Activated CD4-positive, alpha-beta memory T cell treated with anti-CD3 and anti-CD28 coated beads for 36 hours (primary cell): ENCODE measurements at regions of chr2 and their contacts with region 1.

Region 1: GRCh38 chr2:127649684-127650040 is 3.7 kb downstream of the GPR17 start:
- DNase-seq: peak; percentile 83
- H3K4me3 Mint-ChIP-seq: no peak overlapping the region
- H3K27ac Mint-ChIP-seq: no peak overlapping the region
- H3K4me1 Mint-ChIP-seq: peaks cover 7% of the 10 kb centered on the region
- H3K27me3 Mint-ChIP-seq: no peaks in the 10 kb centered on the region

Region 2: GRCh38 chr2:127324635-127325034 is 325.0 kb before region 1 on chr2:
- CTCF ChIA-PET with region 1: interaction called, 5 read pairs
- POLR2A ChIA-PET with region 1: no interaction called
- intact Hi-C with region 1: loop called (anchors 10 kb)
- DNase-seq: no peak
- H3K4me3 Mint-ChIP-seq: no peak overlapping the region
- H3K27ac Mint-ChIP-seq: no peak overlapping the region
- H3K4me1 Mint-ChIP-seq: peaks cover 6% of the 10 kb centered on the region
- H3K27me3 Mint-ChIP-seq: no peaks in the 10 kb centered on the region

Region 3: DNA sequence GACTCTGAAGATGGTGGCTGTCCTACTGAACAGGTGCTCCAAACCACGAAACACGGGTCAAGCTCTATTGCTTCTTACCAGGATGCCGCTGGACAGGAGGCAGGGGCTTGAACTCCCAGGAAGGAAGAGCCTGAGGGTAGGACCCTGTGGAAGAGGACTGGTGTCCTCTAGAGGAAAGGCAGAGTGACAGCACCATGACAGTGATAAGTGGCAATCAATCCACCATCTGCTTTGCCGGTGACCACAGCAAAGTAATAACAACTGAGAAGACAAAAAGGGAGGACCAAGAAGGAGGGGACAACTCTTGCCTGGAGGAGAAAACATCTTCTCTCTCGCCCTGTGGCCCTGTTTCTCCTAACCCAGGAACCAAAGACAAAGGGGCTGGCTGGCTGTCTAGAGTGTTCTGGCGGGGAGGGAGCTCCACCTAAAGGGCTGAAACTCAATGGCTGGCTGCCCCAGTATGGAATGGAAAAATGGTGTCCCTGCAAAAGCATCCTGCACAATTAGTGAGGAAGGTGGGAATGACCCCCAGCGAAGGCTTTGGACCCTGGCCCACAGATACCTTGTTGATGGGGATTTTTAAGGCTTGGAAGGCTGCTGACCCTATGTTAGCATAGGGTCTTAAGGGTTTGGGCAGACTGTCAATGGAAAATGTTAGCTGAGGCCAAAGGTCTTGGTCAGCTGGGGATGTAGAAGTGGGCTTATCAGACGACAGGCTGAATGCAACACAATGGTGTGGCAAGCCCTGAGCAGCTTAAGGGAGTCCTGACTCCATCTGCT is 196.1 kb before region 1 on chr2:
- CTCF ChIA-PET with region 1: no interaction called
- POLR2A ChIA-PET with region 1: no interaction called
- intact Hi-C with region 1: no loop called
- DNase-seq: no peak
- H3K4me3 Mint-ChIP-seq: no peak overlapping the region
- H3K27ac Mint-ChIP-seq: no peak overlapping the region
- H3K4me1 Mint-ChIP-seq: peaks cover 25% of the 10 kb centered on the region
- H3K27me3 Mint-ChIP-seq: peaks cover 8% of the 10 kb centered on the region

Region 4: DNA sequence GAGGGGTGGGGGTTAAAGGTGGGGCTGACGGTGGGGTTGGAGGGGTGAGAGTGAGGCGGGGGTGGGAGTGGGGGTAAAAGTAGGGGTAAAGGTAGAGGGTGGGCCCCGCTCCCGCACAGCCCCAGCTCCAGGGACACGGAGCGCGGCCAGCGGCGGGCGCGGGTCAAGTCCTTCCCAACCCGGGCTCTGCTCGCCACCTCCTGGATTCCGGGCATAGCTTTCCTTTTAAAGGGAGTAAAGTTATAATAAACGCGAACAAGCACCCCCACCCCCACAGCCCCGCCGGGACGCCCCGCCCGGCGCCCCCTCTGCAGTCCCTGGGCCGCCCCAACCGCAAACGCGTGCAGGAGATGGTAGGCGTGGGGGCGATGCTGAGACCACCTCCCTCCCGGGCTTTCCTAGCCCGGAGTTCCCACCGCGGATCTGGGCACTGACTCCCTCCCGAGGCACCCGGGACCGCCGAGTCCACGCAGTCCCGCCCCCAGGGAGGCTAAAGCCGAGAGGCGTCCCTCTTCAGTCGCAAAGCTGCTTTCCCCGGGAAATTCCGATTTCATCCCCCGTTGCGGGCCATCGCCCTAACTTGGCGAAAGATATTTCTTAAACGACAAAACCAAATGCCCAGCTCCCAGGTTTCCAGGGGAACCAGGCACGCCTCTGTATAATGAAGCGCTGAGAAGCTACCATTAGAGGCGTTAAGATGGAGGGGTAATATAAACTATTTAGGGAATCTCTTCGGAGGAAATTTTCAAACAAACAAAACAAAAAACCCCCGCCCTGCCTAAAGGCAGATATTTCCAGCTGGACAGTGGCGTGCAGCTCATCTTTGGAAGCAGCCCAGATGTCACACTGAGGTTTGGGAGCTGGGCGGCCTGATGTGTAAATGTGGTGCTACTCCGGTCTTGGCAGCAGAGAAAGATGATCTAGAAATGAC is 25.9 kb after region 1 on chr2 and contains the start of gene LIMS2:
- CTCF ChIA-PET with region 1: interaction called, 10 read pairs
- POLR2A ChIA-PET with region 1: no interaction called
- intact Hi-C with region 1: no loop called
- DNase-seq: no peak
- H3K4me3 Mint-ChIP-seq: peak within 1 kb of the TSS; percentile 58
- H3K27ac Mint-ChIP-seq: no peak within 1 kb of the TSS
- H3K4me1 Mint-ChIP-seq: peaks cover 4% of the 10 kb centered on the region
- H3K27me3 Mint-ChIP-seq: peaks cover 36% of the 10 kb centered on the region
- total RNA-seq, gene LIMS2: 12.3 to 13.1 TPM